Body of pancreas (tissue), 4 donors: ENCODE measurements at regions of chr20 and their contacts with region 1.

Region 1: DNA sequence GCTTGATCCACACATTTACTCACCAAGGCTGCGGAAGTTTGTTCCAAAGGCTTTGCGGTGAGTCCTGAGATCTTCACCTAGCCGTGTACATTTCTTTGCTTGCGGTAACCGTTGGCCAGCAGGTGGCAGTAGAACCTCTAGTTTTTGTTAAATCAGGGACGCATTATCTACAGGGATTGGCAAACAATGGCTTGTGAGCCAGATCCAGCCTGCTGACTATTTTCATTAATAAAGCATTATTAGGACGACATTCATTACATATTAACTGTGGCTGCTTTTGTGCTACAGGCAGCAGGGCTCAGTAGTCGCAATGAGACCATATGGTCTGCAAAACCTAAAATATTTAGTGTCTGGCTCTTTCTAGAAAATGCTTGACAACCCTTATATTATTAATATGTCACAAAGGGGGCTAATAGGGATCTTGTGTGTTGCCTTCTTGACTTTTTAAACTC is 174.1 kb downstream of the DOK5 start:
- DNase-seq: peak; percentile 89 to 94 (median 91)
- ATAC-seq: peak; percentile 76
- H3K4me3 ChIP-seq: no peak overlapping the region
- H3K27ac ChIP-seq: no peak overlapping the region
- H3K4me1 ChIP-seq: peaks cover 18% of the 10 kb centered on the region
- H3K27me3 ChIP-seq: no peaks in the 10 kb centered on the region
- CTCF ChIP-seq: peak; percentile 61 to 85 (median 82)
- POLR2A ChIP-seq: no peak

Region 2: GRCh38 chr20:54097236-54097529 is 552.4 kb before region 1 on chr20:
- intact Hi-C with region 1: loop called (anchors 5 kb)
- DNase-seq: no peak
- ATAC-seq: no peak
- H3K4me3 ChIP-seq: no peak overlapping the region
- H3K27ac ChIP-seq: no peak overlapping the region
- H3K4me1 ChIP-seq: no peaks in the 10 kb centered on the region
- H3K27me3 ChIP-seq: no peaks in the 10 kb centered on the region
- CTCF ChIP-seq: no peak
- POLR2A ChIP-seq: no peak

Region 3: GRCh38 chr20:54207743-54208547 is 441.6 kb before region 1 on chr20 and contains the start of gene PFDN4:
- intact Hi-C with region 1: loop called (anchors 5 kb)
- DNase-seq: peak; percentile 77 to 85 (median 81)
- ATAC-seq: peak; percentile 94
- H3K4me3 ChIP-seq: peak within 1 kb of the TSS; percentile 92 to 97
- H3K27ac ChIP-seq: peak within 1 kb of the TSS; percentile 95 to 98 (median 96)
- H3K4me1 ChIP-seq: peaks cover 14% of the 10 kb centered on the region
- H3K27me3 ChIP-seq: no peaks in the 10 kb centered on the region
- CTCF ChIP-seq: peak; percentile 75 to 85 (median 82)
- POLR2A ChIP-seq: peak in 2 of 3 donors; percentile 52 to 61
- total RNA-seq, gene PFDN4: 16.5 to 48.8 TPM

Region 4: DNA sequence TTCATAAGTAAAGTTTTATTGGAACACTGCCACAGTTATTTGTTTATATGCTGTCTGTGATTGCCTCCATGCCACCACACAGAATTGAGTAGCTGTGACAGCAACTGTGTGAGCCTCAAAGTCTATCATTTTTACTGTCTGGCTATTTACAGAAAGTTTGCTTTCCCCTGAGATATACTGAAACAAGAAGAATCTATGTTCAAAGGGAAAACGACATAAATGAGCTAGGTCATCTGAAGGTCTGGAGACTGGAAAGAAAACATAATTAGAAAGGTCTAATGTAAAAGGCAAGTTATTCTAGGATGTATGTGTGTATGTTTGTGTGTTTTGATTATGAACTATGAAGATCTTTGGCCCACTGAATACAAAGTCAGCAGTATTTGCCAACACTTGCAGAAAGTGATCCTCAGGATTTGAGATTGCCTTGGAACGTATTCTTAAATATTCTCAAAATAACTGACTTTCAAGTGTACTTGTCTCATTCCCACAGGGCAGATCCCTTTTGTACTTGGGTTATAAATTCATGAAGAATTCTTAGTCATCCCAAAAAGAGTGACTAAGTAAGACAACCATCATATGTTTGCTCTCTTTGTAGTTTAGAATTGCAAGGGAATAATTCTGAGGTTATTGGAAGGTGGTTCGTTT is 503.6 kb after region 1 on chr20:
- intact Hi-C with region 1: no loop called
- DNase-seq: no peak
- ATAC-seq: no peak
- H3K4me3 ChIP-seq: no peak overlapping the region
- H3K27ac ChIP-seq: no peak overlapping the region
- H3K4me1 ChIP-seq: no peaks in the 10 kb centered on the region
- H3K27me3 ChIP-seq: no peaks in the 10 kb centered on the region
- CTCF ChIP-seq: no peak
- POLR2A ChIP-seq: no peak